ENCODE measurements at regions of chr11 and their contacts with region 1.

Region 1: DNA sequence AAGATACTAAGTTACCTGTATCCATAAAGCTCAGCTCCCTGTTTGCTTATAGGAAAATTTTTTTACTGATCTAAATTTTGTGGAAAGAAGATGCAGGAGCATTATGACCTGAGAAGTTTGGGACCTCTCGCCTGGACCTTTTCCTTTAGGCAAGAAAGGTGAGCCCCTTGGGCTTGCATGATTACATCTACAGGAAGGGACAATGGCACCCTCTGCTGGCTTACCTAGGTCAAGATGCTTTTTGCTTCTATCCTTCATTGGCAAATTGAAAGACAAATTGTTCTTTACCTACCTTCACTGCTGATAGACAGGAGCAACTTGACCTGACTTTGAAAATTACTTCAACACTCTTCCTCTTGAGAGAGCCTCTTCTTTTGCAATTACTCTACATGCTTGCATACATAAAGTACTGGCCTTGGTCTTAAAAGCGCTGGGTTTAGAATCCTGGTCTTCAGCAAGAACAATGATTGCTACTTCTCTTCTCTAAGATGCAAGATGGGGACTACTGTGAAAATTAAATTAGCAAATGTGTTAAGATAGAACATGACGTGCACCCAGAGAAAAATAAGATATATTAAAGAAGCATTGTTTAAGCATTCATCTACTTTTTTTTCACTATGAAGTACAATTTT is 147.2 kb downstream of the TRPC6 start:
- DNase-seq: peak; percentile 38
- ATAC-seq: peak; percentile 65; the same call in 1 of the 2 replicates
- H3K4me3 ChIP-seq: no peak overlapping the region
- H3K27ac ChIP-seq: no peak overlapping the region
- H3K4me1 ChIP-seq: no peaks in the 10 kb centered on the region
- H3K27me3 ChIP-seq: peaks cover 7% of the 10 kb centered on the region; the same call in 1 of the 2 replicates
- CTCF ChIP-seq: peak; percentile 89

Region 2: GRCh38 chr11:100980156-100980555 is 456.5 kb before region 1 on chr11:
- CTCF ChIA-PET with region 1: no interaction called
- POLR2A ChIA-PET with region 1: no interaction called
- in situ Hi-C with region 1: no loop called
- intact Hi-C with region 1: loop called (anchors 5 kb)
- DNase-seq: no peak
- ATAC-seq: no peak
- H3K4me3 ChIP-seq: no peak overlapping the region
- H3K27ac ChIP-seq: no peak overlapping the region
- H3K4me1 ChIP-seq: no peaks in the 10 kb centered on the region
- H3K27me3 ChIP-seq: no peaks in the 10 kb centered on the region
- CTCF ChIP-seq: peak; percentile 53; the same call in 1 of the 2 replicates

Region 3: GRCh38 chr11:101121416-101121815 is 315.2 kb before region 1 on chr11:
- CTCF ChIA-PET with region 1: no interaction called
- POLR2A ChIA-PET with region 1: no interaction called
- in situ Hi-C with region 1: no loop called
- intact Hi-C with region 1: loop called (anchors 5 kb)
- DNase-seq: no peak
- ATAC-seq: no peak
- H3K4me3 ChIP-seq: no peak overlapping the region
- H3K27ac ChIP-seq: no peak overlapping the region
- H3K4me1 ChIP-seq: no peaks in the 10 kb centered on the region
- H3K27me3 ChIP-seq: peaks cover 30% of the 10 kb centered on the region
- CTCF ChIP-seq: no peak

Region 4: DNA sequence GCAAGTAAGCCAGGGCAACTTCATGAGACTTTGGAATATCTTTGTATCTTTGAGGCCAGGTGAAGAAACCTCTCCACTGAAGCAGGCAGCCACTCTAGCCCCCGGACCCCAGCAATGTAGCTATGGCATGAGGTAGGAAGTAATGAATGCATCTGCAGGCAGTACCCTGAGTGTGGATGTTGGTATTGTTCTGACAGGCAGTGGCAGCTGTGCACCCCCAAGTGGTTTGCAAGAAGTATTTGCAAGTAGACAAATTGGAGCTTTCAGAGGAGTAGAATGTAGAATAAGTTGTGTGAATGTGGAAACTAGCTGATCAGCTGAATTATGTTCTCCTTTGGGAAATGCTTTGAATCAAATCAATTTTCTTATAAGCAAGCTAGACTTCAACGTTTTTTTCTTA is 112.6 kb before region 1 on chr11:
- CTCF ChIA-PET with region 1: interaction called, 12 read pairs
- POLR2A ChIA-PET with region 1: no interaction called
- in situ Hi-C with region 1: no loop called
- intact Hi-C with region 1: no loop called
- DNase-seq: no peak
- ATAC-seq: no peak
- H3K4me3 ChIP-seq: no peak overlapping the region
- H3K27ac ChIP-seq: no peak overlapping the region
- H3K4me1 ChIP-seq: no peaks in the 10 kb centered on the region
- H3K27me3 ChIP-seq: peaks cover 5% of the 10 kb centered on the region
- CTCF ChIP-seq: peak; percentile 30